Activated CD8-positive, alpha-beta T cell treated with anti-CD3 and anti-CD28 coated beads for 36 hours (primary cell): ENCODE measurements at regions of chr2 and their contacts with region 1.

Region 1: DNA sequence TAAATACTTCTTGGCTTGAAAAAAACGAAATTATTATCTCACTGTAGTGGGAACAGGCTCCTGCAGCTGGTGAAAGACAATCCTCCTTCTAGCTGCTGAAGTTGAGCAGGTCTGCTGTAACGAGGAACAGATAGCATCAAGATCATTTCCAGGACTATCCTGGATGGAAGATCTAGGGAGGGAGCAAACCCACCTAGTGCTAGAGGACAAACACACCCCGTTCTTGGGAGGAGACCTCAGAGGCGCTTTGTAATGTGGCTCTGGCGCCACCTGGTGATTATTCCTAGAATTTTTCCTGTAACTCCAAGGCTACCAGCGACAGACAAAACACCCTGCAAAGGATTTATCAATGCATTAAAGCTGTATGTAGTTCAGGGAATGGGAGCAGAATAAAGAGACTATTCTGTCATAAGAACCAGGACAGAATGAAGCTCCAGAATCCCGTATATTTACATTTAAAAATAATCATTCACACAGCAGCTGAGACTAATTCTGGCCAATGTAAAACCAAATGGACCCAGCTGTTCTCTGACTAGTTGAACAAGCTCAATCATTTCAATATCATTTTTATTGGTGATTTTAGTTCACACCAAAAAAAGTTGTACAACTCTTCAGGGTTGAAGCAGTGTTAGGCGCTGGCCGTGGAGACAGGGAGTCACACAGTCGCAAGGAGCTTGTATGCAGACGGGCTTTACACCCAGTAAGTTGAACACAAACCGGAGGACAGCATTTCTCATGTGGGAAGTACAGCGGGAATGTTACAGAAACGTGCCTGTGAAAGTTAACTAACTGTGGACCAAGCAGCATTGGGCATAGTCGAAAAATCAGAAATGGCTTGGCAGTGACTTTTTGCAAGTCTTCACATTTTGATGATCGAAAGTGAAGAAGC is 290.3 kb downstream of the TRIB2 start:
- DNase-seq: peak; percentile 68
- ATAC-seq: peak; percentile 79
- H3K4me3 Mint-ChIP-seq: no peak overlapping the region
- H3K27ac Mint-ChIP-seq: no peak overlapping the region
- H3K4me1 Mint-ChIP-seq: peaks cover 2% of the 10 kb centered on the region
- H3K27me3 Mint-ChIP-seq: peaks cover 19% of the 10 kb centered on the region
- CTCF ChIP-seq: peak; percentile 91

Region 2: GRCh38 chr2:11863513-11864328 is 1143.4 kb before region 1 on chr2:
- CTCF ChIA-PET with region 1: interaction called, 13 read pairs
- POLR2A ChIA-PET with region 1: no interaction called
- intact Hi-C with region 1: no loop called
- DNase-seq: peak; percentile 69
- ATAC-seq: peak; percentile 83
- H3K4me3 Mint-ChIP-seq: no peak overlapping the region
- H3K27ac Mint-ChIP-seq: no peak overlapping the region
- H3K4me1 Mint-ChIP-seq: peaks cover 10% of the 10 kb centered on the region
- H3K27me3 Mint-ChIP-seq: peaks cover 5% of the 10 kb centered on the region
- CTCF ChIP-seq: peak; percentile 96

Region 3: GRCh38 chr2:12716282-12717190 is 290.5 kb before region 1 on chr2 and contains the start of gene TRIB2:
- CTCF ChIA-PET with region 1: interaction called, 11 read pairs
- POLR2A ChIA-PET with region 1: no interaction called
- intact Hi-C with region 1: loop called (anchors 5 kb)
- DNase-seq: peak; percentile 87
- ATAC-seq: peak; percentile 83
- H3K4me3 Mint-ChIP-seq: peak within 1 kb of the TSS; percentile 96
- H3K27ac Mint-ChIP-seq: peak within 1 kb of the TSS; percentile 89
- H3K4me1 Mint-ChIP-seq: peaks cover 38% of the 10 kb centered on the region
- H3K27me3 Mint-ChIP-seq: no peaks in the 10 kb centered on the region
- CTCF ChIP-seq: peak; percentile 22
- total RNA-seq, gene TRIB2: 9.2 to 11.0 TPM

Region 4: GRCh38 chr2:12897181-12897580 is 109.9 kb before region 1 on chr2:
- CTCF ChIA-PET with region 1: interaction called, 13 read pairs
- POLR2A ChIA-PET with region 1: no interaction called
- intact Hi-C with region 1: no loop called
- DNase-seq: no peak
- ATAC-seq: no peak
- H3K4me3 Mint-ChIP-seq: no peak overlapping the region
- H3K27ac Mint-ChIP-seq: no peak overlapping the region
- H3K4me1 Mint-ChIP-seq: peaks cover 19% of the 10 kb centered on the region
- H3K27me3 Mint-ChIP-seq: no peaks in the 10 kb centered on the region
- CTCF ChIP-seq: no peak

Region 5: DNA sequence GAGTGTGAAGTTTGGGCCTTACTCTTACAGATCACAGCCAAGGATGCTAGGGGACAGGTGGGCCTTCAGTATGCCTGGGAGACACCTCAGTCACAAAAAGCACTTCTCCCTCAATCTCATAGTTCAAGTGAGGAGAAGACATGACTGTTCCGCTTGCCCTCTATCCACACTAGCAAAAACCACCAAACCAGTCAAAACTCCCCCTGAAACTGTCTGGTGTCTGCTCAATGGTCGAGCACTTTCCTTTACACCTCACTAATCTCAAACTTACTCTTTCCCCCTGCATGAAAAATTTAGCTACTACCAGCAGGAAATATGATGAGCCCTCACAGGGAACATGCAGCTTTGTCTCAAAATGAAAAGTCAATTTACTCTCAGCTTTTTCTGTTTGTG is 58.1 kb before region 1 on chr2:
- CTCF ChIA-PET with region 1: interaction called, 10 read pairs
- POLR2A ChIA-PET with region 1: no interaction called
- intact Hi-C with region 1: no loop called
- DNase-seq: peak; percentile 33
- ATAC-seq: peak; percentile 81
- H3K4me3 Mint-ChIP-seq: no peak overlapping the region
- H3K27ac Mint-ChIP-seq: no peak overlapping the region
- H3K4me1 Mint-ChIP-seq: peaks cover 6% of the 10 kb centered on the region
- H3K27me3 Mint-ChIP-seq: peaks cover 27% of the 10 kb centered on the region
- CTCF ChIP-seq: no peak

Region 6: GRCh38 chr2:12990523-12990922 is 16.6 kb before region 1 on chr2:
- CTCF ChIA-PET with region 1: interaction called, 23 read pairs
- POLR2A ChIA-PET with region 1: no interaction called
- intact Hi-C with region 1: no loop called
- DNase-seq: no peak
- ATAC-seq: no peak
- H3K4me3 Mint-ChIP-seq: no peak overlapping the region
- H3K27ac Mint-ChIP-seq: no peak overlapping the region
- H3K4me1 Mint-ChIP-seq: peaks cover 6% of the 10 kb centered on the region
- H3K27me3 Mint-ChIP-seq: peaks cover 2% of the 10 kb centered on the region
- CTCF ChIP-seq: peak; percentile 39

Region 7: GRCh38 chr2:13034861-13035260 is 27.8 kb after region 1 on chr2:
- CTCF ChIA-PET with region 1: interaction called, 13 read pairs
- POLR2A ChIA-PET with region 1: no interaction called
- intact Hi-C with region 1: no loop called
- DNase-seq: no peak
- ATAC-seq: no peak
- H3K4me3 Mint-ChIP-seq: no peak overlapping the region
- H3K27ac Mint-ChIP-seq: no peak overlapping the region
- H3K4me1 Mint-ChIP-seq: no peaks in the 10 kb centered on the region
- H3K27me3 Mint-ChIP-seq: peaks cover 8% of the 10 kb centered on the region
- CTCF ChIP-seq: no peak

Region 8: GRCh38 chr2:13046557-13047165 is 39.6 kb after region 1 on chr2:
- CTCF ChIA-PET with region 1: no interaction called
- POLR2A ChIA-PET with region 1: no interaction called
- intact Hi-C with region 1: no loop called
- DNase-seq: no peak
- ATAC-seq: no peak
- H3K4me3 Mint-ChIP-seq: no peak overlapping the region
- H3K27ac Mint-ChIP-seq: no peak overlapping the region
- H3K4me1 Mint-ChIP-seq: peaks cover 2% of the 10 kb centered on the region
- H3K27me3 Mint-ChIP-seq: peaks cover 21% of the 10 kb centered on the region
- CTCF ChIP-seq: peak; percentile 18